Naive thymus-derived CD4-positive, alpha-beta T cell (primary cell): ENCODE measurements at regions of chr3 and their contacts with region 1.

Region 1: GRCh38 chr3:71251156-71251775 is 332.3 kb downstream of the FOXP1 start:
- DNase-seq: no peak
- ATAC-seq: no peak
- H3K4me3 ChIP-seq: no peak overlapping the region
- H3K4me3 Mint-ChIP-seq: peak overlapping the region in 3 of 10 donors; percentile 9 to 33 (median 30)
- H3K27ac ChIP-seq: no peak overlapping the region
- H3K27ac Mint-ChIP-seq: peak overlapping the region in 8 of 9 donors; percentile 13 to 87 (median 66)
- H3K4me1 ChIP-seq: peaks cover 0 to 37% of the 10 kb centered on the region in 2 donors
- H3K4me1 Mint-ChIP-seq: peaks cover 2 to 95% (median 84%) of the 10 kb centered on the region in 7 donors
- H3K27me3 ChIP-seq: no peaks in the 10 kb centered on the region
- H3K27me3 Mint-ChIP-seq: no peaks in the 10 kb centered on the region

Region 2: DNA sequence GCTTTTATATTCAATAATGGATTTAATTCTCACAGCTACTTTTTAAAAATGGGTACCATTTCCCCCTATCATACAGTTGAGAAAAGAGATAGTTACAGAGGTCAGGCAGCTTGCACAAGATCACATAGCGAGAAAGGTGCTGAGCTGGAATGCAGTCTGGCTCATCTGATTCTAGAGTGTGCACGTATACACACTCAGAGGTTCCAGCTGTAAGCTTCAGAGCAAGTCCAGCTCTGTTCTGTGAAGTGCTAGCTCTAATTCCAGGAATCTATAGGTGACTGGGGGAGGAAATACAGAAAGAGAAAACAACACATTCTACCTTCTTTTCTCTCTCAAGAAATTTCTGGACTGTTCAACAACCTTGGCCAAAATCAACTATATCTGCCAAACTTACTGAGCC is 13.6 kb after region 1 on chr3:
- CTCF ChIA-PET with region 1: interaction called, 3 read pairs
- POLR2A ChIA-PET with region 1: interaction called, 3 read pairs
- intact Hi-C with region 1: loop called in 1 of 2 experiments (anchors 2 kb)
- DNase-seq: no peak
- ATAC-seq: peak; percentile 36
- H3K4me3 ChIP-seq: no peak overlapping the region
- H3K4me3 Mint-ChIP-seq: peak overlapping the region in 9 of 10 donors; percentile 14 to 66 (median 55)
- H3K27ac ChIP-seq: peak overlapping the region; percentile 50
- H3K27ac Mint-ChIP-seq: peak overlapping the region in 8 of 9 donors; percentile 69 to 84 (median 74)
- H3K4me1 ChIP-seq: peaks cover 0 to 33% of the 10 kb centered on the region in 2 donors
- H3K4me1 Mint-ChIP-seq: peaks cover 25 to 87% (median 78%) of the 10 kb centered on the region in 7 donors
- H3K27me3 ChIP-seq: no peaks in the 10 kb centered on the region
- H3K27me3 Mint-ChIP-seq: no peaks in the 10 kb centered on the region

Region 3: GRCh38 chr3:71288269-71288930 is 37.1 kb after region 1 on chr3:
- CTCF ChIA-PET with region 1: no interaction called
- POLR2A ChIA-PET with region 1: no interaction called
- intact Hi-C with region 1: loop called in 1 of 2 experiments (anchors 5 kb)
- DNase-seq: no peak
- ATAC-seq: no peak
- H3K4me3 ChIP-seq: no peak overlapping the region
- H3K4me3 Mint-ChIP-seq: peak overlapping the region in 5 of 10 donors; percentile 6 to 55 (median 10)
- H3K27ac ChIP-seq: no peak overlapping the region
- H3K27ac Mint-ChIP-seq: peak overlapping the region in 7 of 9 donors; percentile 10 to 78 (median 51)
- H3K4me1 ChIP-seq: peaks cover 0 to 14% of the 10 kb centered on the region in 2 donors
- H3K4me1 Mint-ChIP-seq: peaks cover 5 to 85% (median 76%) of the 10 kb centered on the region in 7 donors
- H3K27me3 ChIP-seq: no peaks in the 10 kb centered on the region
- H3K27me3 Mint-ChIP-seq: peaks cover 0 to 2% (median 0%) of the 10 kb centered on the region in 5 donors